ENCODE measurements at regions of chr6 and their contacts with region 1.

Region 1: GRCh38 chr6:106684011-106684410 is 54.6 kb downstream of the QRSL1 start:
- DNase-seq: no peak
- ATAC-seq: no peak
- H3K4me3 ChIP-seq: no peak overlapping the region
- H3K27ac ChIP-seq: no peak overlapping the region
- H3K4me1 ChIP-seq: peaks cover 0 to 2% of the 10 kb centered on the region in 2 donors
- H3K27me3 ChIP-seq: no peaks in the 10 kb centered on the region

Region 2: GRCh38 chr6:105974986-105975385 is 709.0 kb before region 1 on chr6:
- intact Hi-C with region 1: no loop called
- DNase-seq: no peak
- ATAC-seq: no peak
- H3K4me3 ChIP-seq: no peak overlapping the region
- H3K27ac ChIP-seq: no peak overlapping the region
- H3K4me1 ChIP-seq: no peaks in the 10 kb centered on the region
- H3K27me3 ChIP-seq: no peaks in the 10 kb centered on the region

Region 3: DNA sequence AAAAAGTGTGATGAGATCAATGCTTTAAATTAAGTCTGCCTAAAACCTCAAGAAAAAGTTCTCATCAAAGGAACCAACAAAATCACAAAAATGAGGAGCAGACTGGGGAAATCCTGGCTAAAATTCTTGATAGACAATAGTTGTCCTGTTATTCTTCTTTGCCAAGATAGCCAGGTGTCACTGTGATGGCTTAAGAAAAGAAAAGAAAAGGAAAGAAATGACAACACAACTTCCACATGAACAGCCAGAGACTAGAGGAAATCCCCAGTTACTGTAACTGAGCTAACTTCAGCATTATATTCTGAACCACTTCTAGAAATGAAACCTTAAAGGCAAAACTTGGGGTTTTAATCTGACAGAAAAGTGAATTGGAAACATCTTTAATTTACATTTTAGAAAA is 160.9 kb after region 1 on chr6:
- intact Hi-C with region 1: loop called in 1 of 2 experiments (anchors 5 kb)
- DNase-seq: no peak
- ATAC-seq: no peak
- H3K4me3 ChIP-seq: no peak overlapping the region
- H3K27ac ChIP-seq: no peak overlapping the region
- H3K4me1 ChIP-seq: no peaks in the 10 kb centered on the region
- H3K27me3 ChIP-seq: no peaks in the 10 kb centered on the region

Region 4: DNA sequence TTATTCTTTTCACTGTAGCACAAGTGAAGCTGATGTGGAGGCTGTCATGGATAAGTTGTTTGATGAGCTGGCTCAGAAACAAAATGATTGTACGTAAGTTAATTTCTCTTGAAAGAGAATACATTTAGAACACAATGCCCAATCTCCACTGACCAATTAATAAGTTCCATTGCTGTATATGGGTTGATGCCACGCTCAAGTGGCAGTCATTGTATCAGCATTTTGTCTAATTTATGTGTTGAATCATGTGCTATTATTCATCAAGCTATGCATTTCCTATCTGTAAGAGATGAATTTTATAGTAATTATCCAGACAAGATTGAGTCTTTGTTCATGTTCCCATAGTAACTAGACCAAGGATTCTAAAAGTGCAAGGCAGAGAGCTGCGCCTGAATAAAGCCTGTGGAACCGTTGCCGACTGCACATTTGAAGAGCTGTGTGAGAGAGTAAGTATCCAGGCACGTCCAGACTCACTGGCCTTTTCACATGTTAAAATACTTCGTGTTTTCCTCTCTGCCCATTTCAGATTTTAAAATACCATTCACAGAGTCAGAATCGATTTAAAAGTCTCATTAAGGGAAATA is 1792.9 kb after region 1 on chr6:
- intact Hi-C with region 1: no loop called
- DNase-seq: no peak
- ATAC-seq: no peak
- H3K4me3 ChIP-seq: no peak overlapping the region
- H3K27ac ChIP-seq: no peak overlapping the region
- H3K4me1 ChIP-seq: no peaks in the 10 kb centered on the region
- H3K27me3 ChIP-seq: no peaks in the 10 kb centered on the region